SK-N-SH (cell line): ENCODE measurements at regions of chr11 and their contacts with region 1.

Region 1: DNA sequence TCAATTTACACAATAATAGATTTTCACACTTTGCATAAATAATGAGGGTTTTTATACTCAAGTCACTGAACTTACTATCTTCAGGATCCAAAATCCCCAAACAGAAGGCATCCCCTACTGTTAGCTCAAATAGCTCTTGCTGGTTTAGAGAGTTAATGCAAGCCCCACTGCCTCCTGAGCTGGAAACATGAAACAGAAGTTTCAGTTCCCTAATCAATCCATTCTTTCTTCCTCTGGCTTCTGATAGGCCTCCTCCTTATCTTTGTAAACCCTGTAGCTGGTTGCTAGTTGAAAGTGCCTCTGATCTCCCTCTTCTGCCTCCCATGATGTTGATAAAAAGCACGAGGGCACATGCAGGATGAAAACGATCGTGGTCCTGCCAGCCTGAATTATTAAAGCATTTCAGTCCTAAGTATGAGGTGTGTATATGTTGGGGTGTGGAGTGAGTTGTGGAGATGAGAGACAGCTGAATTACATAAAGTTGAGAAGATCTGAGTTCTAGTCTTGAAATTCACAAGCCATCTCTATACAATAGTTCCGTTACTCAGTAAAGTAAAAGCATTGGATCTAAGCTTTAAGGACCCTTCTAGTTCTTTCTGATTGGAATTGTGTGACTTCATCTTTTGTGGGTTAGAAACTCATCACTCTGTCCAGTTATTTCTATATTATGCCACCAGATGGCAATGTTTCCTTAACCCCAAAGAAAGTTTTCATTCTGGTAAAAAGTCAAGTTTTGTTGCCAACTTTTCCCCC is 35.0 kb upstream of the EHF start:
- DNase-seq: peak; percentile 33
- H3K4me3 ChIP-seq: no peak overlapping the region; a peak in 1 of 4 replicates
- H3K27ac ChIP-seq: no peak overlapping the region
- H3K4me1 ChIP-seq: peaks cover 0 to 4% of the 10 kb centered on the region in 2 experiments; a peak in 1 of 4 replicates
- H3K27me3 ChIP-seq: peaks cover 4% of the 10 kb centered on the region; the same call in 1 of the 2 replicates
- CTCF ChIP-seq: peak; percentile 74
- EP300 ChIP-seq: no peak
- RAD21 ChIP-seq: peak; percentile 82

Region 2: DNA sequence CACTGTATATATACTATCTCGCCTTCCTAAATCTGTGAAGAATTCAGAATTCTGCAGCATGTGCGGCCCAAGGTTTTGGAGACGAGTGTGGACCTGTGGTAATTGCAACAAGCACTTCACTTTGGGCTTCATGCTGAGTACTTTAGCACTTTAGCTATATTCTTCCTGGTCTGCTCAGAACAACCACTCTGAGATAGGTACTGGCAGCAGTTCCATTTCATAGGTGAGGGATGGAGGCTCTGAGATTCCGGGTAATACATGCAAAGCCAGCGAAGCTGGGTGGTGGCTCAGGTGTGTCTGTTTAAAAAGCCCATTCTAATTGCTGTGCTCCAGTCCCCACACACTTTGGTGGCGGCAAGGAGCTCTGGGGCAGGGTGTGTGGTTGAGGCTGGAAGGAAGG is 78.8 kb before region 1 on chr11:
- CTCF ChIA-PET with region 1: no interaction called
- POLR2A ChIA-PET with region 1: no interaction called
- DNase-seq: no peak
- H3K4me3 ChIP-seq: no peak overlapping the region
- H3K27ac ChIP-seq: no peak overlapping the region
- H3K4me1 ChIP-seq: peaks cover 0 to 3% of the 10 kb centered on the region in 2 experiments; a peak in 1 of 4 replicates
- H3K27me3 ChIP-seq: no peaks in the 10 kb centered on the region
- CTCF ChIP-seq: no peak
- EP300 ChIP-seq: no peak
- RAD21 ChIP-seq: no peak

Region 3: DNA sequence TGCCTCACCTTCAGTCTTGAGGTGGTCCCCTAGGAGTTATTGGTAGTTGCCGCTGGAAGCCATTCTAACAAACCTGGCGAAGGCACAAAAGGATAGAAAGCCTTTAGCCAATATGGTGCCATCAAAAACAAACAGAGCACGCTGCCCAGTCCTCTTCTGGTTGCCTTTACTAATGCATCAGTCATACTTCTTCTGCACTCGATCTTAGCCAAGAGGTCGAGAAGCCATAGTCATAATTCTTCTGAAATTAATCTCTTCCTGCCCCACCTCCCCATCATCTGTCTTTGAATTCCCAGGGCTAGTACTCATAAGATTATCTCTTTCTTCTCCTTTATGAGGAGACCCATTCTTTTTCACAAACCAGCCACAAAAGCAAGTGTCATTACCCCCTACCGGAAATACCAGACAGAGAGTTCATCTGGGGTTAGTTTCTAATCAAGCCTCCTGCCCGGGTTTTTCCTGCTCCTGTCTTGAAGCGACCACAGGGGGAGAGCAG is 13.5 kb after region 1 on chr11:
- CTCF ChIA-PET with region 1: interaction called, 23 read pairs
- POLR2A ChIA-PET with region 1: no interaction called
- DNase-seq: no peak
- H3K4me3 ChIP-seq: no peak overlapping the region
- H3K27ac ChIP-seq: peak overlapping the region in 1 of 2 experiments; percentile 65; a peak in 2 of 4 replicates
- H3K4me1 ChIP-seq: peaks cover 17 to 23% of the 10 kb centered on the region in 2 experiments; a peak in 3 of 4 replicates
- H3K27me3 ChIP-seq: no peaks in the 10 kb centered on the region
- CTCF ChIP-seq: no peak
- EP300 ChIP-seq: peak in 1 of 2 experiments; percentile 90; a peak in 2 of 4 replicates
- RAD21 ChIP-seq: no peak

Region 4: GRCh38 chr11:34890812-34891211 is 304.9 kb after region 1 on chr11:
- CTCF ChIA-PET with region 1: interaction called, 88 read pairs
- POLR2A ChIA-PET with region 1: no interaction called
- DNase-seq: peak; percentile 28
- H3K4me3 ChIP-seq: no peak overlapping the region
- H3K27ac ChIP-seq: no peak overlapping the region
- H3K4me1 ChIP-seq: no peaks in the 10 kb centered on the region
- H3K27me3 ChIP-seq: no peaks in the 10 kb centered on the region
- CTCF ChIP-seq: peak; percentile 70
- EP300 ChIP-seq: no peak
- RAD21 ChIP-seq: peak; percentile 74

Region 5: GRCh38 chr11:34926101-34926830 is 340.4 kb after region 1 on chr11:
- CTCF ChIA-PET with region 1: interaction called, 20 read pairs
- POLR2A ChIA-PET with region 1: no interaction called
- DNase-seq: peak; percentile 34
- H3K4me3 ChIP-seq: peak overlapping the region in 1 of 2 experiments; percentile 7; a peak in 1 of 4 replicates
- H3K27ac ChIP-seq: peak overlapping the region; percentile 63 to 67; a peak in 3 of 4 replicates
- H3K4me1 ChIP-seq: peaks cover 11 to 30% of the 10 kb centered on the region in 2 experiments; a peak in 2 of 4 replicates
- H3K27me3 ChIP-seq: no peaks in the 10 kb centered on the region
- CTCF ChIP-seq: peak; percentile 91
- EP300 ChIP-seq: 0 out of 4 replicates have a peak, but pooled peaks of 1 of the 2 experiments have one; percentile 2
- RAD21 ChIP-seq: peak; percentile 92